ENCODE measurements at regions of chr9 and their contacts with region 1.

Region 1: GRCh38 chr9:4690144-4690543 is 10.8 kb downstream of the CDC37L1 start:
- DNase-seq: no peak
- H3K4me3 ChIP-seq: no peak overlapping the region
- H3K27ac ChIP-seq: no peak overlapping the region
- H3K4me1 ChIP-seq: peaks cover 0 to 9% (median 0%) of the 10 kb centered on the region in 4 donors
- H3K27me3 ChIP-seq: no peaks in the 10 kb centered on the region
- CTCF ChIP-seq: no peak
- EP300 ChIP-seq: no peak
- POLR2A ChIP-seq: no peak

Region 2: GRCh38 chr9:4814913-4815312 is 124.8 kb after region 1 on chr9:
- in situ Hi-C with region 1: no loop called
- intact Hi-C with region 1: no loop called
- DNase-seq: no peak
- H3K4me3 ChIP-seq: no peak overlapping the region
- H3K27ac ChIP-seq: peak overlapping the region in 1 of 4 donors; percentile 35
- H3K4me1 ChIP-seq: peaks cover 0 to 22% (median 8%) of the 10 kb centered on the region in 4 donors
- H3K27me3 ChIP-seq: no peaks in the 10 kb centered on the region
- CTCF ChIP-seq: no peak
- EP300 ChIP-seq: no peak
- POLR2A ChIP-seq: no peak

Region 3: GRCh38 chr9:6068983-6069382 is 1378.8 kb after region 1 on chr9:
- in situ Hi-C with region 1: no loop called
- intact Hi-C with region 1: loop called (anchors 5 kb)
- DNase-seq: no peak
- H3K4me3 ChIP-seq: no peak overlapping the region
- H3K27ac ChIP-seq: no peak overlapping the region
- H3K4me1 ChIP-seq: peaks cover 0 to 3% (median 0%) of the 10 kb centered on the region in 4 donors
- H3K27me3 ChIP-seq: no peaks in the 10 kb centered on the region
- CTCF ChIP-seq: no peak
- EP300 ChIP-seq: no peak
- POLR2A ChIP-seq: no peak